ENCODE measurements at regions of chr1 and their contacts with region 1.

Region 1: GRCh38 chr1:39609618-39610331 is 29.7 kb downstream of the HEYL start:
- H3K4me3 Mint-ChIP-seq: peak overlapping the region; percentile 21
- H3K27ac Mint-ChIP-seq: no peak overlapping the region
- H3K4me1 Mint-ChIP-seq: no peaks in the 10 kb centered on the region
- H3K27me3 Mint-ChIP-seq: peaks cover 9% of the 10 kb centered on the region

Region 2: DNA sequence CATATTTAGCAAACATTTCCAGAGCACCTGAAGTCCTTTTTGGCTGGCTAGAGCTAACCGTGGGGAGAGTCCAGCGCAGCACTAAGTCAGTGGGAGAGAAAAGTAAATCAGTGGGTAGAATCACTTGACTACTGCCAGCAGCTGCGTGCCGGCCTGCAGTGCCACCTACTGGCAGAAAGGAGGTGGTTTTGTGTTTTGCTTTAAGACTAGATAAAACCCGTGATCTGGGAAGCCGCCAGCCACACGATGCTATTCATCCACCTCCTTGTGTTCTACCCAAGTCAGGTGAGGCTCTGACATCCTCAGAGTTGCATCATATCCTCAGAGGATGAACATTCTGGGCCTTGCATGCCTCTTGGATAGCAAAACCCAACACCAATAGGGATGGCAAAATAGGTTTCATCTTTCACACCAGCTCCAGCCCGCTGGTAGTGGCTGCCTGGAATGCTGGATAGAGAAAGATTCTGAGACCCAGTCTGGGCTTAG is 43.8 kb after region 1 on chr1:
- intact Hi-C with region 1: loop called (anchors 1 kb)
- H3K4me3 Mint-ChIP-seq: no peak overlapping the region
- H3K27ac Mint-ChIP-seq: no peak overlapping the region
- H3K4me1 Mint-ChIP-seq: peaks cover 7% of the 10 kb centered on the region
- H3K27me3 Mint-ChIP-seq: peaks cover 12% of the 10 kb centered on the region

Region 3: GRCh38 chr1:39720094-39720999 is 110.6 kb after region 1 on chr1:
- intact Hi-C with region 1: loop called (anchors 1 kb)
- H3K4me3 Mint-ChIP-seq: no peak overlapping the region
- H3K27ac Mint-ChIP-seq: no peak overlapping the region
- H3K4me1 Mint-ChIP-seq: no peaks in the 10 kb centered on the region
- H3K27me3 Mint-ChIP-seq: peaks cover 35% of the 10 kb centered on the region

Measured in dendritic cell treated with granulocyte-macrophage colony-stimulating factor and Interleukin-4, amounts not matched to agents 40 ng/mL and 50 ng/mL, for 4 days (primary cell).